ENCODE measurements at regions of chr3 and their contacts with region 1.

Region 1: DNA sequence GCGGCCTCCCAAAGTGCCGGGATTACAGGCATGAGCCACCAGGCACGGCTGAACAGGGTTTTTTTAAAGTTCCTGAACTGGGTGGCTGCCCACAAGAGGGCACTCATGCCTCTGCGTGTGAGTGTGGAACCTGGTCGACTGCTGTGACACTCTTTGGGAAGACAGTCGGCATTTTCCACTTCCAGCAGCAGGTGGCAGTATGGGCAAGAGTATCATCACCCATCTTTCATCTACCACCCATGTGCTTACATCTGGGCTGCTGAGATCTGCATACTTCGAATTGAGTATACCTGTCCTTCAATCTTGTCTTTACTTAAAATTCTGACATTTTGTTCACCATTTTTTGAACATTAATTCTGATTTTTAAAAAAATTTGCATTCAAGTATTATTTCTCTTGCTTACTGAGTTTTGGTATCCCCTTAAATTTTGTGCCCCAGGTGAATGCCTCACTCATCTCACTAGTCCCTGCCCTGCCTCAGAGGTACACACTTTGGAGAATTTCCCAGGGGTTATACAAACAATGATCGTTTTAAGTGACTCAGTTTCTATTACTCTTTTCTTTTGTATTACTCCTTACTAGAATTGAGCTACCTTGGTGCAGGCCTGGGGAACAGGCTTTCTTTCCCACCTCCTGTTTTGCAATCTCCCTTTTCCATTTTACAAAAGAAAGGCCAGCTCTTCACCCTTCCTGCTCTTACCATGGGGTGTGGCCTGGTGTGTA is 11.8 kb downstream of the CLEC3B start:
- DNase-seq: peak; percentile 86 to 96 (median 90)
- ATAC-seq: peak; percentile 94
- H3K4me3 ChIP-seq: no peak overlapping the region
- H3K4me3 Mint-ChIP-seq: peak overlapping the region; percentile 62
- H3K27ac ChIP-seq: no peak overlapping the region
- H3K27ac Mint-ChIP-seq: no peak overlapping the region
- H3K4me1 ChIP-seq: peaks cover 51% of the 10 kb centered on the region
- H3K4me1 Mint-ChIP-seq: peaks cover 56% of the 10 kb centered on the region
- H3K27me3 ChIP-seq: peaks cover 3 to 8% of the 10 kb centered on the region in 2 experiments
- H3K27me3 Mint-ChIP-seq: peaks cover 49% of the 10 kb centered on the region
- CTCF ChIP-seq: peak; percentile 91

Region 2: DNA sequence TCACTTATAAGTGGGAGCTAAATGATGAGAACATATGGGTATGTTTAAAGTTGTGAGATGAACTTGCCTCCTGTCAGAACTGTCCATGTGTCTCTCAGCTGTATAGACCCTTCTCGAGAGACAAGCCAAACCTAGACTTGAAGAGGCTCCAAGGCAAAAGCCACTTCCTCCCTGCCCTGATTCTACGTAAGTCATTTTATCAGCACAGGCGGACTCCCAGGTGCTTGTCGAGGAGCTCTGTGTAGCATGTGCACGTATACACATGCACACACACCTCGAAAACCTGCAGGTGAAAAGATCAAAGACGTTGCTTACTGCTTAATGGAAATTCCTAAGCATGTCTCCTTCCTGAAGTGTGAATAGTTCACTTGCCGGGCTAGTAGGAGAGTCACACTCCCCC is 17.4 kb before region 1 on chr3:
- CTCF ChIA-PET with region 1: no interaction called
- POLR2A ChIA-PET with region 1: interaction called, 3 read pairs
- intact Hi-C with region 1: loop called in 1 of 2 experiments (anchors 1 kb)
- DNase-seq: peak in 7 of 14 experiments; percentile 17 to 63 (median 42)
- ATAC-seq: peak; percentile 96
- H3K4me3 ChIP-seq: no peak overlapping the region
- H3K4me3 Mint-ChIP-seq: peak overlapping the region; percentile 22
- H3K27ac ChIP-seq: no peak overlapping the region
- H3K27ac Mint-ChIP-seq: peak overlapping the region; percentile 64
- H3K4me1 ChIP-seq: peaks cover 18% of the 10 kb centered on the region
- H3K4me1 Mint-ChIP-seq: peaks cover 21% of the 10 kb centered on the region
- H3K27me3 ChIP-seq: no peaks in the 10 kb centered on the region
- H3K27me3 Mint-ChIP-seq: no peaks in the 10 kb centered on the region
- CTCF ChIP-seq: no peak

Region 3: DNA sequence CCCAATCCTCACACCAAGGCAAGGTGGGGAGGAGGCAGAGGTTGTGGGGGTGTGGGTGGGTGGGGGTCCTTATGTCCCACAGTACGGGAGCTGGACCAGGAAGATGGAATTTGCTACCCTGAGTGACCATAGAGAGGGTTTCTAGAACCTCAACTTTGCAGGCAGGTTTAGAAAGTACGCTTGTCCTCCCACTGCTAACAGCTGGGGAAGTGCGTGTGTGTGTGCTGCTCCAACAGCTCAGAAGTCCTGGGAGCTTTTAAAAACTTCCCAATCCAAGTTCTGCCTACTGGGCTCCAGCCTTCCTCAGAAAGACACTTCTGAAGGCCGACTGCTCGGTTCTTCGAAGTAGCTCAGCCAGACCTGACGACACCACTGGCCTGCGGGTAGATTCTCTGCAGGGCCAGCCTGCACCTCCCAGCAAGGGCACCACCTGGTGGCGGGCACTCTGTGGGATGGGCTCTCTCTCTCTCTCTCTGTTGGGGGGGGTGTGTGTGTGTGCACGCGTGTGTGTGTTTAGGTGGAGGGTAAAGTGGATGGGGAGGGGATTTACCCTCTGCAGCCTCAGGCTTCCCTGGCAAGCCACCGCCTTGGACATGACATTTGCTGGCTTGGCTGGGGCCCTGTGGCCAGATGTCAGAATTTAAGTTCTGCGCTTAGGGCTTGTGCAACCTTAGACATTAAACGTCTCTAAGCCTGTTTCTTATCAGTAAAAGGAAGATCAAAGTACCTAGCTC is 172.6 kb after region 1 on chr3:
- CTCF ChIA-PET with region 1: interaction called, 56 read pairs
- POLR2A ChIA-PET with region 1: interaction called, 20 read pairs
- intact Hi-C with region 1: loop called (anchors 1 kb)
- DNase-seq: peak; percentile 76 to 90 (median 81)
- ATAC-seq: peak; percentile 98
- H3K4me3 ChIP-seq: no peak overlapping the region
- H3K4me3 Mint-ChIP-seq: no peak overlapping the region
- H3K27ac ChIP-seq: no peak overlapping the region
- H3K27ac Mint-ChIP-seq: no peak overlapping the region
- H3K4me1 ChIP-seq: peaks cover 17% of the 10 kb centered on the region
- H3K4me1 Mint-ChIP-seq: peaks cover 25% of the 10 kb centered on the region
- H3K27me3 ChIP-seq: peaks cover 4 to 10% of the 10 kb centered on the region in 2 experiments
- H3K27me3 Mint-ChIP-seq: peaks cover 5% of the 10 kb centered on the region
- CTCF ChIP-seq: peak; percentile 85

Region 4: GRCh38 chr3:45499529-45499928 is 461.6 kb after region 1 on chr3:
- CTCF ChIA-PET with region 1: no interaction called
- POLR2A ChIA-PET with region 1: no interaction called
- intact Hi-C with region 1: loop called in 1 of 2 experiments (anchors 2 kb)
- DNase-seq: peak in 2 of 14 experiments; percentile 19 to 29
- ATAC-seq: no peak
- H3K4me3 ChIP-seq: no peak overlapping the region
- H3K4me3 Mint-ChIP-seq: no peak overlapping the region
- H3K27ac ChIP-seq: no peak overlapping the region
- H3K27ac Mint-ChIP-seq: no peak overlapping the region
- H3K4me1 ChIP-seq: peaks cover 17% of the 10 kb centered on the region
- H3K4me1 Mint-ChIP-seq: peaks cover 24% of the 10 kb centered on the region
- H3K27me3 ChIP-seq: no peaks in the 10 kb centered on the region
- H3K27me3 Mint-ChIP-seq: no peaks in the 10 kb centered on the region
- CTCF ChIP-seq: peak; percentile 31

Region 5: GRCh38 chr3:45656575-45657363 is 618.9 kb after region 1 on chr3:
- CTCF ChIA-PET with region 1: interaction called, 5 read pairs
- POLR2A ChIA-PET with region 1: no interaction called
- intact Hi-C with region 1: loop called (anchors 1 to 2 kb)
- DNase-seq: peak; percentile 75 to 92 (median 83)
- ATAC-seq: peak; percentile 93
- H3K4me3 ChIP-seq: no peak overlapping the region
- H3K4me3 Mint-ChIP-seq: no peak overlapping the region
- H3K27ac ChIP-seq: no peak overlapping the region
- H3K27ac Mint-ChIP-seq: peak overlapping the region; percentile 47
- H3K4me1 ChIP-seq: peaks cover 9% of the 10 kb centered on the region
- H3K4me1 Mint-ChIP-seq: peaks cover 17% of the 10 kb centered on the region
- H3K27me3 ChIP-seq: no peaks in the 10 kb centered on the region
- H3K27me3 Mint-ChIP-seq: no peaks in the 10 kb centered on the region
- CTCF ChIP-seq: peak; percentile 90